Activated T-helper 1 cell treated with anti-CD3 and anti-CD28 coated beads, Interleukin-12 subunit alpha, Interleukin-12 subunit beta, Interleukin-2, Interleukin-4 antibody, amounts not matched to agents 30 ng/mL and 10 ng/mL and 1 ng/mL, durations not matched to agents 14 hours and 24 hours and 36 hours (primary cell): ENCODE measurements at regions of chr2 and their contacts with region 1.

Region 1: GRCh38 chr2:97710596-97711386 is 2.6 kb upstream of the ZAP70 start:
- DNase-seq: no peak
- H3K4me3 Mint-ChIP-seq: peak overlapping the region; percentile 94
- H3K27ac Mint-ChIP-seq: peak overlapping the region; percentile 99
- H3K4me1 Mint-ChIP-seq: peaks cover 44% of the 10 kb centered on the region
- H3K27me3 Mint-ChIP-seq: peaks cover 6% of the 10 kb centered on the region

Region 2: GRCh38 chr2:97645695-97646629 is 64.8 kb before region 1 on chr2 and contains the start of gene COX5B:
- intact Hi-C with region 1: loop called (anchors 1 kb)
- DNase-seq: peak; percentile 99
- H3K4me3 Mint-ChIP-seq: peak within 1 kb of the TSS; percentile 86
- H3K27ac Mint-ChIP-seq: peak within 1 kb of the TSS; percentile 97
- H3K4me1 Mint-ChIP-seq: peaks cover 29% of the 10 kb centered on the region
- H3K27me3 Mint-ChIP-seq: peaks cover 3% of the 10 kb centered on the region
- total RNA-seq, gene COX5B: 228 and 241 TPM in 2 replicates

Region 3: GRCh38 chr2:97697252-97698235 is 13.2 kb before region 1 on chr2:
- intact Hi-C with region 1: loop called (anchors 1 kb)
- DNase-seq: peak; percentile 82
- H3K4me3 Mint-ChIP-seq: no peak overlapping the region
- H3K27ac Mint-ChIP-seq: no peak overlapping the region
- H3K4me1 Mint-ChIP-seq: peaks cover 19% of the 10 kb centered on the region
- H3K27me3 Mint-ChIP-seq: peaks cover 8% of the 10 kb centered on the region

Region 4: GRCh38 chr2:97747716-97748115 is 36.9 kb after region 1 on chr2:
- intact Hi-C with region 1: loop called (anchors 1 kb)
- DNase-seq: no peak
- H3K4me3 Mint-ChIP-seq: no peak overlapping the region
- H3K27ac Mint-ChIP-seq: no peak overlapping the region
- H3K4me1 Mint-ChIP-seq: peaks cover 53% of the 10 kb centered on the region
- H3K27me3 Mint-ChIP-seq: no peaks in the 10 kb centered on the region

Region 5: GRCh38 chr2:97761192-97761591 is 50.4 kb after region 1 on chr2:
- intact Hi-C with region 1: no loop called
- DNase-seq: peak; percentile 50
- H3K4me3 Mint-ChIP-seq: peak overlapping the region; percentile 42
- H3K27ac Mint-ChIP-seq: peak overlapping the region; percentile 83
- H3K4me1 Mint-ChIP-seq: peaks cover 36% of the 10 kb centered on the region
- H3K27me3 Mint-ChIP-seq: no peaks in the 10 kb centered on the region

Region 6: DNA sequence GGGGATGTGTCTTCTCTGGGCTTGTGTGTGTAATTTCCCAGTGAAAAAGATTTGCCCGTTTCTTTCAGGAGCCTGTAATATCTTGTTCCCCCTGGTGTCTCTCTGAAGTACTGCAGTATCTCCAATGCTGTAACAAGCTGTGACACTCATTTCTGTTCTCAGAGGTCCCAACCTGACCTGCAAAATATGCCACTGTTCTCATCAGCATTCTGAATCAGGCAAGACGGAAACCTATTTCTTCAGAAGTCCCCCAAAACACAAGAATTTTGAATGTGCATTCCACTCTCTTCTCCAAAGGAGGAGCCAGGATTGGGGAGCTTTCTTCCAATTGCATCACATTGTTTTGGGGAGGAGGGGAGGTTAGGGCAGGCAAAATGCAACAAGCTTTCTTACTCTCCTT is 558.5 kb after region 1 on chr2:
- intact Hi-C with region 1: loop called (anchors 2 kb)
- DNase-seq: no peak
- H3K4me3 Mint-ChIP-seq: no peak overlapping the region
- H3K27ac Mint-ChIP-seq: no peak overlapping the region
- H3K4me1 Mint-ChIP-seq: no peaks in the 10 kb centered on the region
- H3K27me3 Mint-ChIP-seq: peaks cover 10% of the 10 kb centered on the region